Activated CD4-positive, alpha-beta T cell treated with anti-CD3 and anti-CD28 coated beads for 36 hours (primary cell): ENCODE measurements at regions of chrX and their contacts with region 1.

Region 1: GRCh38 chrX:45758319-45758718 is 557.6 kb upstream of the DIPK2B start:
- DNase-seq: peak; percentile 66
- ATAC-seq: peak; percentile 27
- H3K4me3 Mint-ChIP-seq: peak overlapping the region; percentile 57
- H3K27ac Mint-ChIP-seq: peak overlapping the region; percentile 90
- H3K4me1 Mint-ChIP-seq: peaks cover 72% of the 10 kb centered on the region
- H3K27me3 Mint-ChIP-seq: no peaks in the 10 kb centered on the region

Region 2: GRCh38 chrX:45515262-45516215 is 242.8 kb before region 1 on chrX:
- CTCF ChIA-PET with region 1: no interaction called
- POLR2A ChIA-PET with region 1: no interaction called
- intact Hi-C with region 1: loop called in 1 of 2 experiments (anchors 5 kb)
- DNase-seq: peak; percentile 59
- ATAC-seq: peak; percentile 92
- H3K4me3 Mint-ChIP-seq: peak overlapping the region; percentile 43
- H3K27ac Mint-ChIP-seq: peak overlapping the region; percentile 39
- H3K4me1 Mint-ChIP-seq: peaks cover 23% of the 10 kb centered on the region
- H3K27me3 Mint-ChIP-seq: no peaks in the 10 kb centered on the region

Region 3: DNA sequence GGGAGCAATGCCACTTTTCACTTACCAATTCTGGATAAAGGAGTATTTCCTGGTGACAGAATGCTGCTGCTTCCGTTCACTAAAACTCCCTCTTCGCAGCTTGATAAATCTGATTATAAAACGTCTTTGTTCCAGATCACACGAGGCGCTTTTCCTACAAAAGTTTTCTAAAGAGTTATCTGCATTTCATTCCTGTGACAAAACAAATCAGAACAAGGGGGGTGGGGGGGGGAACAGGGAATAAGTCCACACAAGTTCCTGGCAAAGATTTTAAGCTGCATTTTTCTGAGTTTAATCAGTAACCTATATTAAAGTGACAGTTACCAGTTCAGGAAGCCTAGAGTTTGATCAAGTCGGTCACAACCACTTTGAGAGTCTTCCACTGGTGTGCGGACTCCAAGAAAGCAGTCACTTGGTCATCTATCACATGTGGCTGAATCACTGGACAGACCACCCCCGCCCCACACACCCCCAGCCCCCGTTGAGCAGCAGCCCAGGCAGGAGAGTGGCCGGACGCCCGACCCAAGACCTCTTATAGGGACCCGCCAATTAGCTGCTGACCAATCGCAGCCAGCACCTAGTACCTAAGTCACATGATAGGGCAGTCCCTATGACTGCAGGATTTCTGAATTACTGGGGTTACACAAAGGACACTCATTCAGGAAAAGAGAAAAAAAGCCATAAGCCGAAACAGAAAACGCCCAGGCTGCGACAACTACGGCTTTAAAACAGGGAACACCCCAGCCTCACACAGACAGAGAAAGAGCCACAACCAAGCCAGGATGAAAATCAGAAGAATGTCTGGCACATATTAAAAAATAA is 11.7 kb after region 1 on chrX:
- CTCF ChIA-PET with region 1: no interaction called
- POLR2A ChIA-PET with region 1: interaction called, 5 read pairs
- intact Hi-C with region 1: loop called in 1 of 2 experiments (anchors 1 kb)
- DNase-seq: peak; percentile 60
- ATAC-seq: peak; percentile 63
- H3K4me3 Mint-ChIP-seq: peak overlapping the region; percentile 77
- H3K27ac Mint-ChIP-seq: peak overlapping the region; percentile 98
- H3K4me1 Mint-ChIP-seq: peaks cover 53% of the 10 kb centered on the region
- H3K27me3 Mint-ChIP-seq: no peaks in the 10 kb centered on the region

Region 4: DNA sequence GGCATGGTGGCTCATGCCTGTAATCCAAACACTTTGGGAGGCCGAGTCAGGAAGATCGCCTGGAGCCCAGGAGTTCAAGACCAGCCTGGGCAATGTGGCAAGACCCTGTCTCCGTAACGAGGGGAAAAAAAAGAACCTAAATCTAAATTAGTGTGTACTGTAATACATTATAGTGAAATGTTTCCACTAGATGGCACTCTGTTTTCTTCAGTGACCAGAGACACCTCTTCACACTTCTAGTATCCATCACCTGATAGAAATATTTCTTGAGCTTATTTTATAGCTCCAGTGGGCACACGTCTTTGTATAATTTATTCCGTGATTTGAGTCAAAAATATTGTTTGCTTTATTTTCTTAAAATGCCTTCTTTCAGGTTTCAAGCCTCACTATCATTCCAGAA is 43.2 kb after region 1 on chrX:
- CTCF ChIA-PET with region 1: interaction called, 5 read pairs
- POLR2A ChIA-PET with region 1: interaction called, 5 read pairs
- intact Hi-C with region 1: loop called (anchors 1 kb)
- DNase-seq: no peak
- ATAC-seq: peak; percentile 55
- H3K4me3 Mint-ChIP-seq: peak overlapping the region; percentile 63
- H3K27ac Mint-ChIP-seq: peak overlapping the region; percentile 92
- H3K4me1 Mint-ChIP-seq: peaks cover 71% of the 10 kb centered on the region
- H3K27me3 Mint-ChIP-seq: no peaks in the 10 kb centered on the region

Region 5: GRCh38 chrX:45806410-45807121 is 48.2 kb after region 1 on chrX:
- CTCF ChIA-PET with region 1: interaction called, 5 read pairs
- POLR2A ChIA-PET with region 1: interaction called, 7 read pairs
- intact Hi-C with region 1: loop called (anchors 1 kb)
- DNase-seq: peak; percentile 65
- ATAC-seq: peak; percentile 52
- H3K4me3 Mint-ChIP-seq: peak overlapping the region; percentile 68
- H3K27ac Mint-ChIP-seq: peak overlapping the region; percentile 88
- H3K4me1 Mint-ChIP-seq: peaks cover 85% of the 10 kb centered on the region
- H3K27me3 Mint-ChIP-seq: no peaks in the 10 kb centered on the region